GM12878 (cell line): ENCODE measurements at regions of chr6 and their contacts with region 1.

Region 1: DNA sequence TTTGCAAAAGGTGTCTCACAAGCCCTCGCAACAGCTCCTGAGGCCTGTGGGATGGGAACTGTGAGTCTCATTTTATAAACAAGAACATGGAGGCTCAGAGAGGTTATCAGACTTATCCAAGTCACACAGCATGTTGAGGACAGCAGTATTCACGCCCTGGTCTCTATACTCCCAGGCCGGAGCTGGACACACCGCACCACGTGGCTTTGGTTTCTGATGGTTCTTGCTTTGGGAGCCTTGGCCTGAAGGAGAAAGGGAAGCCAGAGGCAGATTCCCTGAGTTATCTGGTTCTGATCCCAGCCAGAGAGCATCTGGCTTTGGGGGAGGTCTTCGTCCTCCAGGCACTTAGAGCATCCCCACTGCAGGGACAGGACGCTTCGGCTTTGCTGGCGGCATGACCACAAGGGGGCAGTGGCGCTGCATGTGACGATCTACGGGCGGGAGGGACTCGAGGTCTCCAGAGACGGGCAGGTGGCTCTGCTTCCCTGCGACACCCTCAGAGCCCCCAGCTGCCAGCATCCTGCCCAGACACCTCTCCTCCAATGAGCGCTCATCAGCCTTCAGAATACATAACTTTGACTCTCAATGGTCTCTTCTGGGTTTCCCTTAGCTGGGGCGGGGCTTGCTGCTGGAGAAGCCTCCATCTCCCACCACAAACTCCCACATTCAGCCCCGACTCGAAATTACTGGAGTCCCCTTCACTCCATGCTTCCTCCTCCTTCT is 51.4 kb upstream of the SAYSD1 start:
- DNase-seq: peak; percentile 20
- ATAC-seq: peak; percentile 99
- H3K4me3 ChIP-seq: no peak overlapping the region
- H3K27ac ChIP-seq: no peak overlapping the region
- H3K4me1 ChIP-seq: no peaks in the 10 kb centered on the region
- H3K27me3 ChIP-seq: peaks cover 2 to 3% of the 10 kb centered on the region in 2 experiments; a peak in 3 of 4 replicates
- CTCF ChIP-seq: peak; percentile 88 to 95 (median 90)
- EP300 ChIP-seq: no peak
- POLR2A ChIP-seq: no peak
- RAD21 ChIP-seq: peak; percentile 91

Region 2: GRCh38 chr6:38871741-38872568 is 294.4 kb before region 1 on chr6:
- CTCF ChIA-PET with region 1: interaction called, 10 read pairs
- POLR2A ChIA-PET with region 1: no interaction called
- RAD21 ChIA-PET with region 1: no interaction called
- SMC1A ChIA-PET with region 1: no interaction called
- in situ Hi-C with region 1: no loop called
- intact Hi-C with region 1: loop called (anchors 10 kb)
- DNase-seq: no peak
- ATAC-seq: peak; percentile 66
- H3K4me3 ChIP-seq: no peak overlapping the region
- H3K27ac ChIP-seq: no peak overlapping the region
- H3K4me1 ChIP-seq: no peaks in the 10 kb centered on the region
- H3K27me3 ChIP-seq: no peaks in the 10 kb centered on the region
- CTCF ChIP-seq: peak; percentile 76 to 92 (median 90)
- EP300 ChIP-seq: no peak
- POLR2A ChIP-seq: no peak
- RAD21 ChIP-seq: peak; percentile 85

Region 3: DNA sequence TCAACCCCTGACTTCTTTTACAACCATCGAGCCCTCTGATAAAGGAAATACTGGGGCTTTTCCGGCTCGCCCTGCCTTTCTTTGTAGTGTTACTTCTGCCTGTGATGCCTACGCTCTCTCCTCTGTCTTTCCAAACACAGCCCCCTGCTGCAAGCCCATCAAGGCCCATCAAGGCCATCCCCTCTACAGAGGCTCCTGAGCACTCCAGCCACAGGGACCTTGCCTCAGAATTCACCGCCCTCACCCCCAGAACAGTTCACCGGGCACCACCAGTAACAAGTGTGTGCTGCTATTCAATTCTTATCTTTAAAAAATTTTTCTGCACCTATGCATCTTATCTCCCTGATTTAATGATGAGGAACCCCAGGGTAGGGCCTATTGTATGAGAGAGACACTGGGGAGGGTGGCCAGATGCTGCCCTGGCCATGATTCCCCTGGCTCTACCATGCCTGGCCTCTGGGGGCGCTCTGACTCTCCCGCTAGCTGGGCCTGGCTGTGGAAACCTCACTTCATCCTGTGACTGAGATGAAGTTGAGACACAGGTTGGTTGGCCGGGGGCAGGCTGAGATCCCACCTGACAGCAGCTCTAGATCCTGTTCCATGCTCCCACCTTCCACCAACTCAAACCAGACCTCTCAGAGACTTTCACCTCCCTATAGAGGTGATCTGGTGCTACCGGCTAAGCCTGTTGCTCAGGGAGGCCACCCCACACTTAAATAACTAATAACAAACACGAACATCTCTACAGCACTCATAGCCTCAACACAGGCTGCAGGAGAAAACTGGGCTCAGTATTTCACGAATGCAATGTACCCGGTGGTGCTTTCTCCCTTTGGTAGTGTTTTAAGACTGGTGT is 137.0 kb before region 1 on chr6:
- CTCF ChIA-PET with region 1: interaction called, 3 read pairs
- POLR2A ChIA-PET with region 1: no interaction called
- RAD21 ChIA-PET with region 1: no interaction called
- SMC1A ChIA-PET with region 1: no interaction called
- in situ Hi-C with region 1: no loop called
- intact Hi-C with region 1: loop called (anchors 5 kb)
- DNase-seq: no peak
- ATAC-seq: peak; percentile 96
- H3K4me3 ChIP-seq: no peak overlapping the region
- H3K27ac ChIP-seq: no peak overlapping the region
- H3K4me1 ChIP-seq: no peaks in the 10 kb centered on the region
- H3K27me3 ChIP-seq: no peaks in the 10 kb centered on the region; a peak in 1 of 4 replicates
- CTCF ChIP-seq: peak; percentile 79 to 94 (median 83)
- EP300 ChIP-seq: no peak
- POLR2A ChIP-seq: no peak
- RAD21 ChIP-seq: peak; percentile 57

Region 4: DNA sequence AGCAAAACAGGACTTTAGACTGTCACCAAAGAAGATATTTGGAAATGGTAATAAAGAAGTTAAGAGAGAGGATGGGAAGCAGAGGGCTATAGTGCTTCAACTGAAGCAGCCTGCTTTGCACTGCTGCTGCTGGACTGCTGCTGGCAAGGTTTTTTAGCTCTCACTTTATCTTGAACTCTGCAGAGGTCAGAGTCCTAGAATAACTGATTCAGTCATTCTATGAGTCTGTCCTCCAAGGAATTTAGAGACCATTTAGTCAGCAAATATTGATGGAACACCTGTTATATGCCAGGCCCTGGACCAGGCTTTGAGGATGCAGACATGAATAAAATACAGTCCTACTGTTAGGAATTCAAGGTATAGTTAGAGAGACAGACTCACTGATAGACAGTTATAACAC is 42.2 kb before region 1 on chr6:
- CTCF ChIA-PET with region 1: no interaction called
- POLR2A ChIA-PET with region 1: no interaction called
- RAD21 ChIA-PET with region 1: no interaction called
- SMC1A ChIA-PET with region 1: no interaction called
- in situ Hi-C with region 1: no loop called
- intact Hi-C with region 1: no loop called
- DNase-seq: no peak
- ATAC-seq: no peak
- H3K4me3 ChIP-seq: no peak overlapping the region
- H3K27ac ChIP-seq: no peak overlapping the region
- H3K4me1 ChIP-seq: no peaks in the 10 kb centered on the region
- H3K27me3 ChIP-seq: no peaks in the 10 kb centered on the region
- CTCF ChIP-seq: no peak
- EP300 ChIP-seq: no peak
- POLR2A ChIP-seq: no peak
- RAD21 ChIP-seq: no peak

Region 5: GRCh38 chr6:39210450-39210849 is 44.1 kb after region 1 on chr6:
- CTCF ChIA-PET with region 1: no interaction called
- POLR2A ChIA-PET with region 1: no interaction called
- RAD21 ChIA-PET with region 1: no interaction called
- SMC1A ChIA-PET with region 1: no interaction called
- in situ Hi-C with region 1: no loop called
- intact Hi-C with region 1: no loop called
- DNase-seq: no peak
- ATAC-seq: no peak
- H3K4me3 ChIP-seq: no peak overlapping the region
- H3K27ac ChIP-seq: no peak overlapping the region
- H3K4me1 ChIP-seq: peaks cover 10% of the 10 kb centered on the region
- H3K27me3 ChIP-seq: no peaks in the 10 kb centered on the region; a peak in 1 of 4 replicates
- CTCF ChIP-seq: no peak
- EP300 ChIP-seq: no peak
- POLR2A ChIP-seq: no peak
- RAD21 ChIP-seq: no peak

Region 6: GRCh38 chr6:39309942-39310531 is 143.7 kb after region 1 on chr6:
- CTCF ChIA-PET with region 1: interaction called, 167 read pairs
- POLR2A ChIA-PET with region 1: no interaction called
- RAD21 ChIA-PET with region 1: interaction called, 17 read pairs
- SMC1A ChIA-PET with region 1: interaction called, 83 read pairs
- in situ Hi-C with region 1: no loop called
- intact Hi-C with region 1: no loop called
- DNase-seq: no peak
- ATAC-seq: peak; percentile 88
- H3K4me3 ChIP-seq: no peak overlapping the region
- H3K27ac ChIP-seq: no peak overlapping the region
- H3K4me1 ChIP-seq: no peaks in the 10 kb centered on the region
- H3K27me3 ChIP-seq: peaks cover 9 to 14% of the 10 kb centered on the region in 2 experiments
- CTCF ChIP-seq: peak; percentile 89 to 92 (median 91)
- EP300 ChIP-seq: no peak
- POLR2A ChIP-seq: no peak
- RAD21 ChIP-seq: peak; percentile 87